Natural killer cell (primary cell): ENCODE measurements at regions of chr12 and their contacts with region 1.

Region 1: DNA sequence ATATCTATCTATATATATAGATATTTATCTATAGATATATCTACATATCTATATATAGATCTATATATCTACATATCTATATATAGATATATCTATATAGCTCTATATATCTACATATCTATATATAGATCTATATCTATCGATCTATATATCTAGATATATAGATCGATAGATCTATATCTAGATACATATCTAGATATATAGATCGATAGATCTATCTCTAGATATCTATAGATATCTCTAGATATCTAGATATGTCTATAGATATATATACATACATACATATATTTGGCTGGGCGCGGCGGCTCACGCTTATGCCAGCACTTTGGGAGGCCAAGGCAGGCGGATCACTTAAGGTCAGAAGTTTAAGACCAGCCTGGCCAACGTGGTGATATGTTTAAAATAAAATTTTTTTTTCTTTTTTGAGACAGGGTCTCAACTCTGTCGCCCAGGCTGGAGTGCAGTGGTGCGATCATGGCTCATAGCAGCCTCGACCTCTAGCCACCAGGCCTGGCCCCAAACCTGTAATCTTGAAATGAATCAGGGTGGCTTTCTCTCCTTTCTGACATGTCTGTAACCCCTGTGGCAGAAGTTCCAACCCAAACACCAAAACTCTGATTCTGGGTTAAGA is 18.1 kb downstream of the ARPC3 start:
- DNase-seq: no peak
- ATAC-seq: no peak
- H3K4me3 ChIP-seq: peak overlapping the region; percentile 45
- H3K4me3 Mint-ChIP-seq: no peak overlapping the region
- H3K27ac ChIP-seq: no peak overlapping the region
- H3K27ac Mint-ChIP-seq: peak overlapping the region; percentile 95 to 98
- H3K4me1 ChIP-seq: peaks cover 5% of the 10 kb centered on the region
- H3K4me1 Mint-ChIP-seq: peaks cover 0 to 5% of the 10 kb centered on the region in 2 donors
- H3K27me3 ChIP-seq: no peaks in the 10 kb centered on the region
- H3K27me3 Mint-ChIP-seq: no peaks in the 10 kb centered on the region
- CTCF ChIP-seq: no peak

Region 2: DNA sequence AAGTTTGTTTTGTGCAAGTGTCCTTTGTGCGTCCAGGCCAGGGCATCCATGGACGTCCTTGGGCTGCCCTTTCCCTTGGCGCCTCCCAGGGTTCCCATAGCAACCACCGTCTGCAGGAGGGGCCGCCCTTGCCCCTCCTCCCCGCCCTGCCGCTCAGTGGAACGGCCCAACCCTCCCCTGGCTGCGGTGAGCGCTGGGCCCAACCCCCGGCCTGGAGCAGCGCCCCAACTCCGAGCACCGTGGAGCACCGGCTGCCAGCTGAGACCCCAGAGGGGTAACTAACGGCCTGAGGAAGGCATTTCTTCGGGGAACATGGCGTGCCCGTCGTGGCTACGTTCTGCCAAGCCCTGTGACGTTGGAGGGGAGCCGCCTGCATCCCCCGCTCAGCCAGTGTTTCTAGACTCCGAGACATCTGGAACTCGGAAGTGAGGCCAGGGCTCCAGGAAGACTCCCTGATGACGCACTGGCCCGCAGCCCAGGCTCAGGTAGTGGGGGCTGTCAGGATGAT is 1321.0 kb before region 1 on chr12:
- intact Hi-C with region 1: no loop called
- DNase-seq: peak in 1 of 2 donors; percentile 71
- ATAC-seq: peak; percentile 61 to 74 (median 64)
- H3K4me3 ChIP-seq: peak overlapping the region; percentile 44
- H3K4me3 Mint-ChIP-seq: peak overlapping the region; percentile 60
- H3K27ac ChIP-seq: peak overlapping the region; percentile 55
- H3K27ac Mint-ChIP-seq: peak overlapping the region in 1 of 2 donors; percentile 29
- H3K4me1 ChIP-seq: no peaks in the 10 kb centered on the region
- H3K4me1 Mint-ChIP-seq: peaks cover 0 to 9% of the 10 kb centered on the region in 2 donors
- H3K27me3 ChIP-seq: no peaks in the 10 kb centered on the region
- H3K27me3 Mint-ChIP-seq: no peaks in the 10 kb centered on the region
- CTCF ChIP-seq: no peak

Region 3: DNA sequence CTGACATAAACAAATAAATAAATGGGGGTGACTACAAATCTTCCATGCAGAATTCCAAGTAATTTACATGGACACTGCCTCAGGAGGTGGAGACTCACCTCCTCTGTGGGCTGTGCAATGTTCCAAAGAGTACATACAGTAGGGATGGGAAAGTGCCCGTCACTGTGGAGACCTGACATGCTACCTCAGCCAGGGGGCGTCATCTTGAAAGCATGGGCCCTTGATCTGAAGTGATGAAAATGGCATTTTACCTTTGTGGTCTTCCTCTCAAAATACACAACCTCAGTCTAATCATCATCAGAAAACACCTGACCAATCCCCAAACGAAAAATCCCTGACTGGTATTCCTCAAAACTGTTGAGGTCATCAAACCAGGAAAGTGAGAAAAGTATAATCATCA is 77.0 kb before region 1 on chr12:
- intact Hi-C with region 1: loop called (anchors 1 kb)
- DNase-seq: peak in 1 of 2 donors; percentile 61
- ATAC-seq: peak in 2 of 3 donors; percentile 34 to 62
- H3K4me3 ChIP-seq: no peak overlapping the region
- H3K4me3 Mint-ChIP-seq: no peak overlapping the region
- H3K27ac ChIP-seq: no peak overlapping the region
- H3K27ac Mint-ChIP-seq: no peak overlapping the region
- H3K4me1 ChIP-seq: peaks cover under 1% of the 10 kb centered on the region
- H3K4me1 Mint-ChIP-seq: peaks cover 17 to 19% of the 10 kb centered on the region in 2 donors
- H3K27me3 ChIP-seq: no peaks in the 10 kb centered on the region
- H3K27me3 Mint-ChIP-seq: peaks cover 0 to 3% of the 10 kb centered on the region in 2 donors
- CTCF ChIP-seq: peak; percentile 29

Region 4: GRCh38 chr12:110403146-110403975 is 28.7 kb before region 1 on chr12 and contains the start of gene ANAPC7:
- intact Hi-C with region 1: loop called (anchors 2 kb)
- DNase-seq: peak; percentile 78 to 93
- ATAC-seq: peak; percentile 96 to 98 (median 96)
- H3K4me3 ChIP-seq: peak within 1 kb of the TSS; percentile 78
- H3K4me3 Mint-ChIP-seq: peak within 1 kb of the TSS; percentile 99
- H3K27ac ChIP-seq: peak within 1 kb of the TSS; percentile 91
- H3K27ac Mint-ChIP-seq: peak within 1 kb of the TSS in 1 of 2 donors; percentile 97
- H3K4me1 ChIP-seq: peaks cover 18% of the 10 kb centered on the region
- H3K4me1 Mint-ChIP-seq: peaks cover 12 to 19% of the 10 kb centered on the region in 2 donors
- H3K27me3 ChIP-seq: no peaks in the 10 kb centered on the region
- H3K27me3 Mint-ChIP-seq: no peaks in the 10 kb centered on the region
- CTCF ChIP-seq: no peak
- total RNA-seq, gene ANAPC7: 46.5 to 77.0 (median 50.4) TPM